Esophagus squamous epithelium (tissue), 5 donors: ENCODE measurements at regions of chr2 and their contacts with region 1.

Region 1: GRCh38 chr2:95314964-95315611 is 17.9 kb downstream of the KCNIP3 start:
- DNase-seq: no peak
- H3K4me3 ChIP-seq: no peak overlapping the region
- H3K27ac ChIP-seq: no peak overlapping the region
- H3K4me1 ChIP-seq: peaks cover 9 to 86% (median 26%) of the 10 kb centered on the region in 3 donors
- H3K27me3 ChIP-seq: peaks cover 0 to 61% (median 0%) of the 10 kb centered on the region in 4 donors
- CTCF ChIP-seq: peak in 5 of 6 experiments; percentile 54 to 78 (median 72)
- POLR2A ChIP-seq: no peak

Region 2: DNA sequence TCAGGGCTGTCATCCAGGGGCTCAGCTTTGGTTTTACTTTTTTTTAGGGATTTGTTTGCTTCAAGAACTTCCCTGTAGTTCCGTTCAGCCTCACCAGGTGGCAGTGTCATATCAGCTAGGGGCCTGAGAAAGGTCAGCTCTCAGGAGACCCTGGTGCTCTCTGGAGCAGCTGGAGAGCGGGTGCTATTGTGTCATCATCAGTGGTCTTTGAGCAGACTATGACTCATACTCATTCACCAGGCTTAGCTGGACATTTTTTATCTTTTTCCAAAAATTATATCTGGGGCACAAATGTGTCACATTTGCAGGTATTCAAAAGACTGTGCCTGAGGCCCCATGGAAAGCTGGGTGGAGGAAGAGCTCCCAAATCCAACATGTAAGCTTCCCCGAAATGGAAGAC is 83.4 kb before region 1 on chr2:
- intact Hi-C with region 1: loop called (anchors 10 kb)
- DNase-seq: no peak
- H3K4me3 ChIP-seq: no peak overlapping the region
- H3K27ac ChIP-seq: no peak overlapping the region
- H3K4me1 ChIP-seq: peaks cover 0 to 5% (median 0%) of the 10 kb centered on the region in 3 donors
- H3K27me3 ChIP-seq: no peaks in the 10 kb centered on the region
- CTCF ChIP-seq: peak in 5 of 6 experiments; percentile 70 to 90 (median 77)
- POLR2A ChIP-seq: no peak

Region 3: DNA sequence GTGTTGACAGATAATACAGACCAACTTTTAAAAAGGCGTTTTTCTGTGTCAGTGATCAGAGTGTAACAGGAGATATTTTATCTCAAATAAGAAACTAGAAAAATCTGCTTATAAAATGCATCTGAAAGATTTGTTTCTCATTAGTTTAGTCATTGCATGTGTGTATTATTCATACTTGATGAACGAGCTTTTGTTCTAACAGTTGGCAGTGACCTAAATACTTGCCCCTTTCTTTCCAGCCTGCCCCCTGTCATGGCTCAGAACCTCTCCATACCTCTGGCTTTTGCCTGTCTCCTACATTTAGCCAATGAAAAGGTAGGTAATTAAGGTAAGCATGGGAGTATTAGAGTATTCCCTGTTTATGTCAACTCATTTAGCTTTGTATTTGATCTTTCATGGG is 1054.1 kb after region 1 on chr2:
- intact Hi-C with region 1: no loop called
- DNase-seq: no peak
- H3K4me3 ChIP-seq: no peak overlapping the region
- H3K27ac ChIP-seq: no peak overlapping the region
- H3K4me1 ChIP-seq: peaks cover 0 to 5% (median 0%) of the 10 kb centered on the region in 3 donors
- H3K27me3 ChIP-seq: no peaks in the 10 kb centered on the region
- CTCF ChIP-seq: no peak
- POLR2A ChIP-seq: no peak